ENCODE measurements at regions of chr6 and their contacts with region 1.

Region 1: DNA sequence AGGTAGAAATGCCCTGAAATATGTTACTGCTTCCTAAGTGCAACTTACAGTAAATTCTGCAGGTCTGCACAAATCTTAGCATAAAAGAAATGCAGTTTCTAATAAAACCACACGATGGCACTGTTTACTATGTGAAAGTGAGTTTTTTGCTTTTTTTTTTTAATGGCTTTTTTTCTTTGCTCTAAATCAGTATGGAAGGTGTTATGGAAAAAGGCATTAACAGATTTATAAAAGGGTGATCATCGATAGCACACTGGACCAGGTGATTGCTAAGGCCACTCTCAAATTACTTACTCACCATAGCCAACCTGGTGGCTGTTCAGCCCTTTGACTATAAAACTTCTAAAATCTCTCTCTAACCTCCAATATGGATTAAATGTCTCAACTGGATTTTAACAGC is 45.8 kb downstream of the AHI1 start:
- DNase-seq: no peak
- H3K4me3 ChIP-seq: no peak overlapping the region
- CTCF ChIP-seq: peak; percentile 14

Region 2: DNA sequence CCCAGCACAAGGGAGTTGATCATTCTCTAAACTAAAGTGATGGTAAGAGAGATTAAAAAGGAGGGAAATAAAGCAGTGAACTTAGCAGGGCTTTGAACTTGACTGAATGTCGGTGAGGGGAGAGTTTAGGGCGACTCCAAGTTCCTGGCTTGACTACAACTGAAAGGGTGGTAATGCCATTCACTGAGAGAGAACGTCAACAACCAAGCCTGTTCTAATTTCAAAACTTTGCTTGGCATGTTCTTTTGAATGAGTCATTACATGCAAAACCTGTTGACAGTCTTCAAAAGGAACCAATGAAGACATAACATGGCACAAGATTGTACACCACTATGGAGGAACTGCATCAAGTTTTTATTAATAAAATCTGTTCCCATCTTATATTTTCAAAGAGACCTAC is 280.8 kb before region 1 on chr6:
- CTCF ChIA-PET with region 1: no interaction called
- POLR2A ChIA-PET with region 1: no interaction called
- DNase-seq: no peak
- H3K4me3 ChIP-seq: no peak overlapping the region
- CTCF ChIP-seq: no peak

Region 3: DNA sequence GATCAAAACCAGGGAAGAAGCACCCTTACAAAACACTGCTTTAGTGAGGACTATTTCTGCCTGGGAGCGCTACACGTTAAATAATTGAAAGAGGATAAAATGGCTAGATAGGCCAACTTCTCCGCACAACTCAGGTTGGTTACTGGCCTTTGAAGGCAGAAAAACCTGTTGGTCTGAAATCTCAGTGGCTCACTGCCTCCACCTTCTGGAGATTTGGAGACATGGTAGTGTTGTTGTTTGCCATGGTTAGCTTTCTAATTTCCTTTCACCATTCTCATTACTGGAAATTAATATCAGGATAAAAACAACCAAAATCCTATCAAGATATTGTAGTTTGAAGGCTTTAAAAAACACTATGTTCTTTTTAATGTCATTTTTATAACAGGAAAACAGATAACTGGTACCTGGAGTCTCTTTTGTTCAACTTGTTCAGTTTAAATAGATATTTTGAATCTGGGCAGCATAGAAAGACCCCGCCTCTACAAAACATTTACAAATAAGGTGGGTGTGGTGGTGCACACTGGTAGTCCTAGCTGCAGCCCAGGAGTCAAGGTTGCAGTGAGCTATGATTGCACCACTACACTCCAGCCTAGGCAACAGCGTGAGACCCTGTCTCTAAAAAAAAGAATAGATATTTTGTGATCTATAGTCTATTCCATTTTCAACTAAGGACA is 865.5 kb after region 1 on chr6:
- CTCF ChIA-PET with region 1: interaction called, 42 read pairs
- POLR2A ChIA-PET with region 1: no interaction called
- DNase-seq: no peak
- H3K4me3 ChIP-seq: no peak overlapping the region
- CTCF ChIP-seq: peak; percentile 79